ENCODE measurements at regions of chr5 and their contacts with region 1.

Region 1: DNA sequence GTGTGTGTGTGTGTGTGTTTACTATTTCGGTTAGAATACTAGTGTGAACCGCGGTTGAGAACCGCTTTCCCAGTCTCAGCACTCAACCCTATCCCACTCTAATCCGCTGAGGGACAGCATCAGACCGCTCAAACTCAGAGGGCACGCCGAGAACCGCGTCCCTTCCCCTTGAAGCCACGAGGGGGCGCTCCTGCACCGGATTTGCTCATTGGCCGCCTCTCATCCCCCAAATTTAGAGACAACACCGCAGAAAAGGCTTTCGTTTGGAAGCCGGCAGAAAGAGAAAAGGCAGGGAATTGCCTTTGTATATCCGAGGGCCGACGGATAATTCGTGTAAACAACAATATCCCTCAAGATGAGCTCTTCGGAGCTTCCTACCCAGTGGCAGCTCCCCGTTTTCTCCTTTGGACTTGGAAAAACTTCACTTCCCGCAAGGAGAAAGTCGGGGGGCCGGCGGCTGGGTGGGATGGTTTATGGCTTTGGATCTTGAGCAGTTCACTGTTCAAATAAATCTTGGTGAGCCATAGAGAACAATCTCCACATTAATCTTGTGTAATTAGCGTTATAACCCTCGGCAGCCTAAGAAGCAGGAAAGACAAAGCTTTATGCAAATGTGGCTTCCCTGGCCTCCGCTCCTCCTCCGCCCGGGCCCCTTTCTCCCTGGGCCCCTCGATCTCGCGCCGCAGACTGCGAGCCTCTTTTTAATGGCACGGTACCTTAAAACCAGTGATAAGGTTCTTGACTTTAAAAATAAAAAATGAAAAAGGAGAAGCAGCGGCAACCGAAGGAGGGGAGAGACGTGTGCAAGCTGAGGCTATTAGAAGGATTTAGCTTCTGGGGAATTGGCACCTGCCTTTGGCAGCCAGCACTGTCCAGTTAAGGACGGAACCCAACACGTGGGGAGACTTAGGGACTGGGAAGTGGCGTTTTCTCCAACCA is 296.8 kb downstream of the PARP8 start:
- DNase-seq: peak; percentile 56
- H3K4me3 ChIP-seq: peak overlapping the region in 2 of 3 experiments; percentile 37
- H3K27ac ChIP-seq: no peak overlapping the region
- H3K4me1 ChIP-seq: no peaks in the 10 kb centered on the region
- H3K27me3 ChIP-seq: peaks cover 35 to 50% of the 10 kb centered on the region in 2 experiments
- CTCF ChIP-seq: peak; percentile 94 to 99
- POLR2A ChIP-seq: no peak

Region 2: DNA sequence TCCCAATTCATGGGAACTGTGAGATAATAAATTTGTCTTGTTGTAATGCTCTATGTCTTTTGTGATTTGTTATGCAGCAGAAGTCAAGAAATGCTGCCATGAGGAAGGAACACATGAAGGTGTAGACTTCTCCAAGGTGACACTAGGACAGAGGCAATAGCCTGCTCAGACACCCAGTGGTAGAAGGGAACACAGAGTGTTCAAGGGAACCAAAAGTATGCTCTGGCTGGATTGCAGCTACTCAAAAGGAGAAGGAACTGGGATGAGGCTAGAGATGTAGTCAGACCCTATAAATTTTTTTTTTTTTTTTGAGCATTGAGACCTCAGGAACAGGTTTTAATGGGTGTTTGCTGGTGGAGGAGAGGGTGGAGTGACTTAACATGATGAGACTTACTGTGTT is 64.2 kb before region 1 on chr5:
- CTCF ChIA-PET with region 1: no interaction called
- POLR2A ChIA-PET with region 1: no interaction called
- dilution Hi-C with region 1: no loop called
- intact Hi-C with region 1: no loop called
- DNase-seq: no peak
- H3K4me3 ChIP-seq: no peak overlapping the region
- H3K27ac ChIP-seq: no peak overlapping the region
- H3K4me1 ChIP-seq: no peaks in the 10 kb centered on the region
- H3K27me3 ChIP-seq: no peaks in the 10 kb centered on the region
- CTCF ChIP-seq: no peak
- POLR2A ChIP-seq: no peak

Region 3: GRCh38 chr5:51185850-51186329 is 222.7 kb after region 1 on chr5:
- CTCF ChIA-PET with region 1: no interaction called
- POLR2A ChIA-PET with region 1: no interaction called
- dilution Hi-C with region 1: no loop called
- intact Hi-C with region 1: no loop called
- DNase-seq: no peak
- H3K4me3 ChIP-seq: no peak overlapping the region
- H3K27ac ChIP-seq: no peak overlapping the region
- H3K4me1 ChIP-seq: no peaks in the 10 kb centered on the region
- H3K27me3 ChIP-seq: no peaks in the 10 kb centered on the region
- CTCF ChIP-seq: no peak
- POLR2A ChIP-seq: no peak

Region 4: DNA sequence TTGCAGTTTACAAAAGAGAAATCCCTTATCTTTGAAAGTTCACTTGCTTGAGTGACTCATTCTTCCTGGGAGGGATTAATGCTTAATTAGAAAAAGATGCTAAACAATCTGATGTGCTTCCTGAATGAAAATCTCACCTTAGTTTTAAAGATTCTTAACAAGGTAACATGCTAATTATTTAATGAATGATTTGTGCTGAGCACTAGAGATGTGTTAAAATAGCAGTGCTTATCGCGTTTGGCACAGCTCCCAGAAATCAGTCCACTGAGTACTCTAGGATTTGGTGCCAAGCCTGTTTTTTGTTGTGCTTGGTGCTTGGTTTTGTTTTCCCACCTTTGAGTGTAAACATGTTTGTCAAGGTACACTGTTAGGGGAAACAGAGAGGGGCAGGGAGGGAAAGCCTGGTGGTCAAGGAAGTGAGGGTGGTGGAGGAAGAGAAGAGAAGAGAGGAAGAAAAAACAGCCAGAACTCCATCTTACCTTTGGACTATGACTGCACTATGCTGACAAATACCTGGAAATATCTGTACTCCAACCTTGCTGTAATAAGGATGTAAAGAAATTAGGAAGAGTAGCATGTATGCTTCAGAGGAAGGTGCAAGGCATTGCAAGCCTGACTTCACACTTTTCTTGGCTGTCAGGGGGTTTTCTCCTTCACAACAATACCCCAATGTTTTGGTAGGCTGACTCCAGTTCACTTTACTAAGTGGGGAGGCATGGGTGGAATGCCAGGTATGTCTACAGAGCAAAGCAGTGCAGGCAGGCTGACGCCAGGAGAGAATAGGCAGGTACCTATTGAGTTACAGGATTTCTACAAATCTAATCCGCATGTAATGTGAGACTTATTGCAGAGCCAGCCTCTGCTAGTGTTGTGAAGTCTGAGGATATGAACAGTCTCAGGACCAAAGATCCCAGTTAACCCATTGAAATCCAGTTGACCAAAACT is 262.9 kb after region 1 on chr5:
- CTCF ChIA-PET with region 1: no interaction called
- POLR2A ChIA-PET with region 1: no interaction called
- dilution Hi-C with region 1: no loop called
- intact Hi-C with region 1: no loop called
- DNase-seq: no peak
- H3K4me3 ChIP-seq: no peak overlapping the region
- H3K27ac ChIP-seq: no peak overlapping the region
- H3K4me1 ChIP-seq: no peaks in the 10 kb centered on the region
- H3K27me3 ChIP-seq: no peaks in the 10 kb centered on the region
- CTCF ChIP-seq: no peak
- POLR2A ChIP-seq: no peak

Region 5: DNA sequence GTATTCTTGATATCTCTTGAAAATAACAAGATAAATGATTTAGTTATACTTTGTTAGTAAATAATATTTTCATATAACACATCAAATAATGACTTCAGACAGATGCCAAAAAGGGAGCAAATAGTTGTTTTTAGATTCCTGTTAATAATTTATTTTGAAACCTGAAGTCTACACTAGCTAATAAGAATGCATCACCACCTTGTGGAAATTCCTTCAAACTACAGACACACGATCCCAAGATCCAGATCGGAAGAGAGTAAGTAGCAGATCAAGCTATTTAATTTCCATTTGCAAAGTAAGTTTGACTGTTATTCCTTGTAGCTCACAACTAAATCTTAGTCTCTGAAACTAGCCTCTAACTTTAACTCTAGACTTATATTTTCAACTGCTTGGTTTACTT is 384.5 kb after region 1 on chr5:
- CTCF ChIA-PET with region 1: interaction called, 15 read pairs
- POLR2A ChIA-PET with region 1: no interaction called
- dilution Hi-C with region 1: no loop called
- intact Hi-C with region 1: no loop called
- DNase-seq: no peak
- H3K4me3 ChIP-seq: no peak overlapping the region
- H3K27ac ChIP-seq: no peak overlapping the region
- H3K4me1 ChIP-seq: no peaks in the 10 kb centered on the region
- H3K27me3 ChIP-seq: no peaks in the 10 kb centered on the region
- CTCF ChIP-seq: no peak
- POLR2A ChIP-seq: no peak

Region 6: GRCh38 chr5:51416149-51416548 is 452.9 kb after region 1 on chr5:
- CTCF ChIA-PET with region 1: interaction called, 15 read pairs
- POLR2A ChIA-PET with region 1: no interaction called
- dilution Hi-C with region 1: no loop called
- intact Hi-C with region 1: loop called (anchors 1 kb)
- DNase-seq: no peak
- H3K4me3 ChIP-seq: no peak overlapping the region
- H3K27ac ChIP-seq: no peak overlapping the region
- H3K4me1 ChIP-seq: no peaks in the 10 kb centered on the region
- H3K27me3 ChIP-seq: no peaks in the 10 kb centered on the region
- CTCF ChIP-seq: no peak
- POLR2A ChIP-seq: no peak

Region 7: GRCh38 chr5:51846015-51846414 is 882.8 kb after region 1 on chr5:
- CTCF ChIA-PET with region 1: interaction called, 28 read pairs
- POLR2A ChIA-PET with region 1: no interaction called
- dilution Hi-C with region 1: no loop called
- intact Hi-C with region 1: loop called (anchors 5 kb)
- DNase-seq: no peak
- H3K4me3 ChIP-seq: no peak overlapping the region
- H3K27ac ChIP-seq: no peak overlapping the region
- H3K4me1 ChIP-seq: no peaks in the 10 kb centered on the region
- H3K27me3 ChIP-seq: no peaks in the 10 kb centered on the region
- CTCF ChIP-seq: no peak
- POLR2A ChIP-seq: no peak

Region 8: DNA sequence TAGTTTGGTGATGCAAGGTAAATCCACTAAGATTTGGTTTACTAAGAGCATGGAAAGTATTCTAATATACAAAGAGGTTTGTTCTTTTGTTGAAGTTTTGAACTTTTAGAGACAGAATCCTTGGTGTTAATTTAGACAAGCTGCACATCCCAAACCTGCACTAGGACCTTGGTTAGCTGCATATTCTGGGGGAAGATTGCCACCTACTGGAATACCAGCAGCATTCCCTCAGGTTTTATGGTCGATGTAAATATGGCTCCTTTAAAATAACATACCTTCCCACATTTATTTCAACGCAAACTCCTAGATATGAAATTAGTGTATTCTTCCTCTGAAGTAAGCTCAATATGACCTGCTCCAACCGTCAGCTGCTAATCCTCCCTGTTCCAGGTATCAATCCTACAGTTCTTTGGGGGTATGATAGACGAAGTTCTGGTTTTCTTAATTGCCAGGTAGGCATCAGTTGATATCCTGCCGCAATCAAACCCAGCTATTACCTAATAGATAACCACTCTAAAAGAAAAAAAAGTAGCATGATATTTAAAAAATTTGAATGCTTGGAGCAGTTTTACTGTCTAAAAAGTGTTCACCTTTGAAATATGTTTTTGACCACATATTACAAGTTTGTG is 1044.1 kb after region 1 on chr5:
- CTCF ChIA-PET with region 1: interaction called, 183 read pairs
- POLR2A ChIA-PET with region 1: no interaction called
- dilution Hi-C with region 1: no loop called
- intact Hi-C with region 1: loop called (anchors 1 kb)
- DNase-seq: peak; percentile 48
- H3K4me3 ChIP-seq: no peak overlapping the region
- H3K27ac ChIP-seq: no peak overlapping the region
- H3K4me1 ChIP-seq: no peaks in the 10 kb centered on the region
- H3K27me3 ChIP-seq: no peaks in the 10 kb centered on the region
- CTCF ChIP-seq: peak; percentile 51 to 67
- POLR2A ChIP-seq: no peak

Region 9: DNA sequence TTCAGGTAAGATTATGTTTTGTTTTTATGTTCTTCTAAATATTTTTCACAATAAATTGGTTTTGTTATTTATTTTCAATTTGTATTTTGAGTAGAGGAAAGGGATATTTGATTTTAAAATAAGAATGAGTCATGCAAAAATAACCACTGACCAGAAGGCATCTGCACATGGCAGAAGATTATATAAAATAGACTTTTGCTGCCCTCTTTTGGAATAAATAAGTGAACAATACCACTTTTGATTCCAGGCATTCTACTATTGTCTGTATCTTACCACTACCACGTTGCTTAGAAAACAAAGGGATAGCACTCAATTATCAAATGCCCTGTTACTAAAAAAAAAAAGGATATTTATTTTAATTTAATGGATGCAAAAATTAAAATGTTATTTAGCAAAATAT is 1597.2 kb after region 1 on chr5:
- CTCF ChIA-PET with region 1: interaction called, 7 read pairs
- POLR2A ChIA-PET with region 1: no interaction called
- dilution Hi-C with region 1: no loop called
- intact Hi-C with region 1: loop called (anchors 2 kb)
- DNase-seq: peak; percentile 14
- H3K4me3 ChIP-seq: no peak overlapping the region
- H3K27ac ChIP-seq: no peak overlapping the region
- H3K4me1 ChIP-seq: no peaks in the 10 kb centered on the region
- H3K27me3 ChIP-seq: no peaks in the 10 kb centered on the region
- CTCF ChIP-seq: no peak
- POLR2A ChIP-seq: no peak

Region 10: GRCh38 chr5:52915176-52915875 is 1952.1 kb after region 1 on chr5:
- CTCF ChIA-PET with region 1: interaction called, 3 read pairs
- POLR2A ChIA-PET with region 1: no interaction called
- dilution Hi-C with region 1: no loop called
- intact Hi-C with region 1: loop called (anchors 5 kb)
- DNase-seq: peak; percentile 88
- H3K4me3 ChIP-seq: peak overlapping the region in 2 of 3 experiments; percentile 12 to 46
- H3K27ac ChIP-seq: no peak overlapping the region
- H3K4me1 ChIP-seq: peaks cover 7% of the 10 kb centered on the region
- H3K27me3 ChIP-seq: no peaks in the 10 kb centered on the region
- CTCF ChIP-seq: peak; percentile 53 to 58
- POLR2A ChIP-seq: no peak